ENCODE measurements at regions of chr6 and their contacts with region 1.

Region 1: GRCh38 chr6:149028767-149029405 is 282.1 kb downstream of the UST start:
- DNase-seq: peak; percentile 74
- ATAC-seq: no peak
- H3K4me3 Mint-ChIP-seq: peak overlapping the region; percentile 10
- H3K27ac Mint-ChIP-seq: no peak overlapping the region
- H3K4me1 Mint-ChIP-seq: peaks cover 46% of the 10 kb centered on the region
- H3K27me3 Mint-ChIP-seq: no peaks in the 10 kb centered on the region
- CTCF ChIP-seq: peak; percentile 78

Region 2: GRCh38 chr6:148578245-148578732 is 450.6 kb before region 1 on chr6:
- CTCF ChIA-PET with region 1: interaction called, 10 read pairs
- POLR2A ChIA-PET with region 1: no interaction called
- intact Hi-C with region 1: no loop called
- DNase-seq: peak; percentile 68
- ATAC-seq: peak; percentile 95
- H3K4me3 Mint-ChIP-seq: no peak overlapping the region
- H3K27ac Mint-ChIP-seq: no peak overlapping the region
- H3K4me1 Mint-ChIP-seq: peaks cover 3% of the 10 kb centered on the region
- H3K27me3 Mint-ChIP-seq: peaks cover 30% of the 10 kb centered on the region
- CTCF ChIP-seq: peak; percentile 63

Region 3: GRCh38 chr6:148818939-148819583 is 209.8 kb before region 1 on chr6:
- CTCF ChIA-PET with region 1: no interaction called
- POLR2A ChIA-PET with region 1: no interaction called
- intact Hi-C with region 1: no loop called
- DNase-seq: no peak
- ATAC-seq: no peak
- H3K4me3 Mint-ChIP-seq: no peak overlapping the region
- H3K27ac Mint-ChIP-seq: no peak overlapping the region
- H3K4me1 Mint-ChIP-seq: no peaks in the 10 kb centered on the region
- H3K27me3 Mint-ChIP-seq: peaks cover 1% of the 10 kb centered on the region
- CTCF ChIP-seq: no peak

Region 4: DNA sequence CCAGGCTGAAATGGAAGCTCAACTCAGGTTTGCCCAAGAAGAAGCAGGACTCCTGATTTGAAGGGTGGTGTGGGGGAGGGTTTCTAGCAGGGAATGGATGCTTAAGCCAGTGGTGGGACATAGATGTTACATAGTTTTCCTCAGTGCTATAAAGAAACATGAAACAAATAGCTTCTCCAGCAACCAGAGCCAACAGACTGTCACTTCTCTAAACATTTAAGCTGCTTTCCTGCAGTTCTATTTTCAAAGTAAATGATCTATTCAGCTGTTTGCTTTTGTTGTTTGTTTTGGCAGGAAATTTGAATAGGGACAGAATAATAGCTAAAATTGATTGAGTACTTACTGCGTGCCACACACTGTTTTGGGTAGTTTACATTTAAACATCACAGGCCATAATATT is 113.1 kb before region 1 on chr6:
- CTCF ChIA-PET with region 1: no interaction called
- POLR2A ChIA-PET with region 1: no interaction called
- intact Hi-C with region 1: no loop called
- DNase-seq: no peak
- ATAC-seq: no peak
- H3K4me3 Mint-ChIP-seq: no peak overlapping the region
- H3K27ac Mint-ChIP-seq: no peak overlapping the region
- H3K4me1 Mint-ChIP-seq: no peaks in the 10 kb centered on the region
- H3K27me3 Mint-ChIP-seq: no peaks in the 10 kb centered on the region
- CTCF ChIP-seq: no peak

Region 5: DNA sequence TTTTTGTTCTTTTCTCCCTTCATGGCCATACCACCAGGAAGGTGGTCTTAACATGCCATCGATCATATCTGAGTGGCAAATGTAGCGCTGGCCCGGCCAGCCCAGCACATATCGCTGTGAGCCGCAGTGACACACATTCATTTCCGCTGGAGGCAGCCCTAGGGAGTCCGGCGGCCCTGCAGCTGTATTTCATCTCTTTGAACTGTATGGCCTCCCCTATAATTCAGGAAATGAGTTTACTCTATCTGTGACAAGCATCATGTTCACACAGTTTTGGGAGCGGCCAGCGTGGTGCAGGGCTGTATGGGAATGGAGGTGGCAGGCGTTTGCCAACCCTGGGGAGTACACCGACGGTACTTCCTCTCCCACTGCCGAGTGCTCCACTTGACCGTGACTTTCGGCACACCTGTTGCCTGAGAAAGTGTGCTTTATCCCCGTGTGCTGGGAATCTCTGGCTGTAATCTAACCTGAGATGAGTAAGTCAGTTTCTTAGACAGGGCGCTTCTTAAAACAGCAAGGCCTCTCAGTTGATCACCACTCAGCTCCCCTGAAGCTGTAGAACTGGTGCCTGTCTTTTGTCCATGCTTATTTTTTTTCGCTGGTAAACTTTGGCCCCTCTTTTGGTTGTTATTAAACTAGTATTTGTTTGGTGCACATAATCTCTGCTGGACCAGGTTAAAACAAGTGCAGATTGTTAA is 31.6 kb after region 1 on chr6:
- CTCF ChIA-PET with region 1: interaction called, 16 read pairs
- POLR2A ChIA-PET with region 1: interaction called, 14 read pairs
- intact Hi-C with region 1: no loop called
- DNase-seq: peak; percentile 77
- ATAC-seq: peak; percentile 93
- H3K4me3 Mint-ChIP-seq: peak overlapping the region; percentile 60
- H3K27ac Mint-ChIP-seq: peak overlapping the region; percentile 84
- H3K4me1 Mint-ChIP-seq: peaks cover 43% of the 10 kb centered on the region
- H3K27me3 Mint-ChIP-seq: no peaks in the 10 kb centered on the region
- CTCF ChIP-seq: no peak

Region 6: DNA sequence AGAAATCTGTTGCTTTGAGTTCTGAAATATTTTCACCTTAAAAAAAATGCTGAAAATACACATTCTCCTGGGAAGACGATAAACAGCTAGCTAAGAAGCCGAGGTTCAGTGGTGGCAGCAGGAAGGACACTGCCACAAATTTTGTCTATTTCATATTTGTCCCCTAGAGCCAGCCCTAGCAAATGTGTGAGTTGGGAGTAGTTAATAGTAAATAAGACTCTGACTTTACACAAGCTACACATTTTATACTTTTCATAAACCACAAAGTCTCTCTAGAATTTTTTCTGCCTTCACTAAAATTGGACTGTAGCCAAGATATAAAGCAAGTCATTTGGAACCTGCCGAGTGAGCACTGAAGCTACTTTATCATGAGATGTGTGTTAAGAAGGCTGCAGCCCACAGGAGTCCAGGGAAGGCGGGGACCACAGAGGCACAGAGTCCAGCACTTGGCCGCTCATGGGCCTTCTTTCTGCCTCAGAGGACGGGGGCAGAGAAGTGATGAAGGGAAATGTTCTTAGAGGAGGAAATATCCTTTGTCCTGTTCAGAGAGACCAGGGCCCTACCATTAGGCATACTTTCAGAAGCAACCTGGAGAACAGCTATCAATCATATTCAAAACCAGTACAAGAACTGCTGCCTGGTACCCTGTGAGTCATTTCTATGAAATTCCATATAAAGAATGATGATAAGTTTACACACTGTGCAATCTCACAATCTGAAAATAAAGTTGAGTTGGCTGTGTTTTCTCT is 46.9 kb after region 1 on chr6:
- CTCF ChIA-PET with region 1: interaction called, 47 read pairs
- POLR2A ChIA-PET with region 1: interaction called, 19 read pairs
- intact Hi-C with region 1: loop called (anchors 2 kb)
- DNase-seq: no peak
- ATAC-seq: peak; percentile 47
- H3K4me3 Mint-ChIP-seq: no peak overlapping the region
- H3K27ac Mint-ChIP-seq: peak overlapping the region; percentile 13
- H3K4me1 Mint-ChIP-seq: peaks cover 25% of the 10 kb centered on the region
- H3K27me3 Mint-ChIP-seq: no peaks in the 10 kb centered on the region
- CTCF ChIP-seq: no peak

Region 7: DNA sequence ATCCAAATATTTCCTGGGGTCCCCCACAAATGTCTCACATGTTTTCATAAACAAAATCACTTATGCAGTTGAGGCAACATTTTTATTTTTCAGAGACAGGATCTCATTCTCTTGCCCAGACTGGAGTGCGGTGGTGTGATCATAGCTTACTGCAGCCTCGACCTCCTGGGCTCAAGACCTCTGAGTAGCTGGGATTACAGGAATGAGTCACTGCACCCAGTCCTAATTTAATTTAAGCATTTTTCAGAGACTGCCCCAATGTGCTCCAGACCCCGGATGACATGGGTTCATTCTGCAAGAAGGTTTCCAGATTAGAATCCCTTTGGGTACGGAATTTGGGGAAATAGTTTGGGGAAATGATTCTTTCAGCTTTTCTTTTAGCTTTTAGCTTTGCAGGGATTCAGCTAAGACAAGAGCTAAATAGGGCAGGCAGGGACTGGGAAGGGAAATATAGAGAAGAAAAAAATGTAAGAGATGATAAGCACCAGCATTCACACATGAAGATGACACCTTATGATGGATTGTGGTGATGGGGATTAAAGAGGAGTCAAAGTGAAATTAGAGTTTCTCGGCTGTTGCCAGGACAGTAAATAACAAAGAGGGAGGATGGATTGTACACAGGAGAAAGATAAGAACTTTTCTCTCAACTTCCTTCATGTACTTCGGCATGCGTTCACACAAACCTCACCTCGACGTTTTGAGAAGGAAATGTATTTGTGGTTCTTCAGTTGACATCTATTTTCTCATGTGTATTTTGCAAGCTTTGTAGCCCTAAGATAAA is 119.2 kb after region 1 on chr6:
- CTCF ChIA-PET with region 1: interaction called, 3 read pairs
- POLR2A ChIA-PET with region 1: interaction called, 3 read pairs
- intact Hi-C with region 1: loop called (anchors 5 kb)
- DNase-seq: no peak
- ATAC-seq: peak; percentile 66
- H3K4me3 Mint-ChIP-seq: peak overlapping the region; percentile 11
- H3K27ac Mint-ChIP-seq: peak overlapping the region; percentile 85
- H3K4me1 Mint-ChIP-seq: peaks cover 66% of the 10 kb centered on the region
- H3K27me3 Mint-ChIP-seq: no peaks in the 10 kb centered on the region
- CTCF ChIP-seq: no peak

Region 8: DNA sequence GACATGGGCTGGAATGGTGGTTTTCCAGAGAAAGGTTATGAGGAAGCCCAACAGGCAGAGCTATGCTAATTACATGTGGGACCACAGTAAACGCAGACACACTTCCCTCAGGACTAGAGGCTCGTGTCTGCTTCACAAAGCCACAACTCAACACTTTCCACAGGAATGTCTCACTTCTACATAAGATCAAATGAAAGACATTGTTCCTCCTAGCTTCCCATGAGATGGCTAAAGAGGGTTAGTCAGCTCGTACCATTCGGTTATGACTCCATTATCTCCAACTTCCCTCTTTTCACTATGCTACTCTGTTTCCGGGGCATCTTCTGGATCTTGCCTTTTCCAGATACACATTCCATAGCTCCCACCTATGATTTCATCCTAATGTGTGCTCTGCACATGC is 485.0 kb after region 1 on chr6:
- CTCF ChIA-PET with region 1: interaction called, 31 read pairs
- POLR2A ChIA-PET with region 1: interaction called, 4 read pairs
- intact Hi-C with region 1: loop called (anchors 5 kb)
- DNase-seq: no peak
- ATAC-seq: no peak
- H3K4me3 Mint-ChIP-seq: no peak overlapping the region
- H3K27ac Mint-ChIP-seq: no peak overlapping the region
- H3K4me1 Mint-ChIP-seq: peaks cover 51% of the 10 kb centered on the region
- H3K27me3 Mint-ChIP-seq: no peaks in the 10 kb centered on the region
- CTCF ChIP-seq: no peak

Measured in activated CD8-positive, alpha-beta T cell treated with anti-CD3 and anti-CD28 coated beads for 36 hours (primary cell).